Panc1 (cell line): ENCODE measurements at regions of chr17 and their contacts with region 1.

Region 1: DNA sequence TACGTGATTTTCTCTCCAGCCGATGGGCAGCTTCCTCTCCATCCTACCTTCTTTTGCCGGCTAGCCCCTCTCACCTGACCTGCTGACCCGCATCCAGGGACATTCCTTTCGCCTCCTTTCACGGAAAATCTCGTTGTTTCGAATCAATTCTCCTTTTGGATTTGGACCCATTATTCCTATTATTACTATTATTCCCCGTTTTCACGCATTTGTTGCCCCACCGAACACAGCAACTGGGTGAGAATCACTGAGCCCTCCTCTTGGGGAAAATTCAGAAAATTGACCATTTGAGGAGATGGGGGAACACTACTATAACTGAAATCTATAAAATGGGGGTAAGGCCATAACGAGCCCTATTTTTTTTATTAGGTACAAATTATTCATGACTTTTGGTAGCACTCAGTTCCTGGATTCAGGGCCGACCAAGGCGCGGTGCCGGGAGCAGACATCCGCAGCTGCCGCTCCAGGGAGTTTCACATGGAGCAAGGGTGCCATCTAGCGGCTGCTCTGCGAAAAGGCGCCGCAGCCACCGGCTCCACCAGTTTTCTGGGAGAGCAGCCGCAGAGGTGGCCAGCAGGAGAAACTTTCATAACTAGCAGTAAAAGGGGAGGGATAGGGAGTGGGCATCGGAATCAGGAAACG is 3.3 kb upstream of the HOXB8 start:
- DNase-seq: no peak
- ATAC-seq: peak; percentile 60
- H3K4me3 ChIP-seq: peak overlapping the region; percentile 68 to 71
- H3K27ac ChIP-seq: peak overlapping the region; percentile 99
- H3K4me1 ChIP-seq: peaks cover 63% of the 10 kb centered on the region
- H3K27me3 ChIP-seq: no peaks in the 10 kb centered on the region
- CTCF ChIP-seq: peak; percentile 100

Region 2: GRCh38 chr17:48543107-48543853 is 75.1 kb before region 1 on chr17:
- CTCF ChIA-PET with region 1: interaction called, 10 read pairs
- POLR2A ChIA-PET with region 1: no interaction called
- in situ Hi-C with region 1: no loop called
- intact Hi-C with region 1: no loop called
- DNase-seq: no peak
- ATAC-seq: peak; percentile 59
- H3K4me3 ChIP-seq: peak overlapping the region; percentile 69 to 81
- H3K27ac ChIP-seq: peak overlapping the region; percentile 98
- H3K4me1 ChIP-seq: peaks cover 48% of the 10 kb centered on the region
- H3K27me3 ChIP-seq: no peaks in the 10 kb centered on the region
- CTCF ChIP-seq: no peak

Region 3: DNA sequence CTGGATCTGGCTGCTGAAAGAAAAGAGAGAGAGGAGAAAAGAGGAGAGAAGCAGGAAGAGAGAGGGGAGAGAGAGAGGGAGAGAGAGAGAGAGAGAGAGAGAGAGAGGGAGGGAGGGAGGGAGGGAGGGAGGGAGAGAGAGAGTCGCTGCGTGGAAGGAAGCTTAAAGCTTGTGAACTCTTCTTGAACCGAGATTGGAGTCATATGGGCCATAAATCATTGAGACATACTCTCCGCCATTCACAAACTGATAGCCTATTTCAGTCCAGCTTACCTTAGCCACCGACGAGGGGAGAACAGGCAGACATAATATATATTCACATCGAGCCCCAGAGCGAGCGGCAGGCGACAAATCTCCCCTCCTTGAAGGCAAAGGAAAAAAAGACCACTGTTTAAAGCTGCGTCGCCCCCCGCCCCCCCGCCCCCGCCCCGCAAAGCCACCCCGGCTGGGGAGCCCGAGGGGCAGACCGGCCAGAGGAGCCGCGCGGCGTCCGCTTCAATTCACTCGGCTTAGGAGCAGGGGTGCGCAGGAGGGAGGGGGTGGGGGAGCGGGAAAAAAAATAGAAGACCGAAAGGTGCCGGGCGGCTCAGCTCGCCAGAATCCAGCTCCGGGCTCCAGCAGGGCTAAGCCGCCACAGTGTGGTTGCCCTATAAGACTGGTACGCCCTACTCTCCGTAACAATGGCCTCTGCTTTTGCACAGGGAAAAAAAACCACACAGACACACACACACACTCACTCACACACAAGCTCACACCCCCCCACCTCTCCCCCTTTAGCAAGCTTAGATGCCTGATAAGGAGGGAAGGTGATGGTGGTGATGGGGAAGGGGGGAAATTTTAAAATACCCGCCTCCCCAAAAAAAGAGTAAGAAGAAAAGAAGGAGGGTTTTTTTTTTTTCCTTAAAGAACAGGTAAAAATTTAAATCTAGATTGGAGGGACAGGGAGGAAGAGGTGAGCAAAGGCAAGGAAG is 62.8 kb before region 1 on chr17:
- CTCF ChIA-PET with region 1: no interaction called
- POLR2A ChIA-PET with region 1: no interaction called
- in situ Hi-C with region 1: loop called (anchors 5 kb)
- intact Hi-C with region 1: loop called (anchors 2 kb)
- DNase-seq: no peak
- ATAC-seq: peak; percentile 47
- H3K4me3 ChIP-seq: peak overlapping the region; percentile 52 to 61
- H3K27ac ChIP-seq: peak overlapping the region; percentile 99
- H3K4me1 ChIP-seq: peaks cover 80% of the 10 kb centered on the region
- H3K27me3 ChIP-seq: no peaks in the 10 kb centered on the region
- CTCF ChIP-seq: no peak

Region 4: DNA sequence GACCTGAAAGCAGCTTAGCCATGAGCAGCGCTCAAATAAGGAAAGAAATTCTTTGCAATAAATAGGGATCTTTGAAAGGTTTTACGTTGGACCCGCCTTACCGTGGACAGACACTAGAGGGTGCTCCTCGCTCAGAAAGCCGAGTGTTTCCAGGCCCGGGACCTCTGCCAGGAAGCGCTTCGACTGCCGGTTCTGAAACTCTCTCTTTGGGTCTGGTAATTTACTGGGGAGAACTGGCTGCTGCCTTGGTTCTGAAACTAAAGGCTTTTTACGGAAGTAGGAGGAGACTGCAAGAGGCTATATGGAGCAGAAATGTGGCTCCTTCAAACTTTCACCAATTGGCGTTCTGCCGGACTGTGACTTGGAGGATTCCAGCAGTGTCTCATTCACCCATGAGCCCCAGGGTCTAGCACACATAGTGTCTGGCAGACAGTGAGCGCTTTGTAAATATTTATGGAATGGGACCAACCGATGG is 53.4 kb after region 1 on chr17:
- CTCF ChIA-PET with region 1: no interaction called
- POLR2A ChIA-PET with region 1: no interaction called
- in situ Hi-C with region 1: no loop called
- intact Hi-C with region 1: no loop called
- DNase-seq: peak; percentile 25
- ATAC-seq: peak; percentile 88
- H3K4me3 ChIP-seq: peak overlapping the region in 1 of 2 experiments; percentile 36; a peak in 2 of 4 replicates
- H3K27ac ChIP-seq: peak overlapping the region; percentile 17; the same call in 1 of the 2 replicates
- H3K4me1 ChIP-seq: peaks cover 5% of the 10 kb centered on the region
- H3K27me3 ChIP-seq: no peaks in the 10 kb centered on the region
- CTCF ChIP-seq: peak; percentile 99